ENCODE measurements at regions of chr17 and their contacts with region 1.

Region 1: DNA sequence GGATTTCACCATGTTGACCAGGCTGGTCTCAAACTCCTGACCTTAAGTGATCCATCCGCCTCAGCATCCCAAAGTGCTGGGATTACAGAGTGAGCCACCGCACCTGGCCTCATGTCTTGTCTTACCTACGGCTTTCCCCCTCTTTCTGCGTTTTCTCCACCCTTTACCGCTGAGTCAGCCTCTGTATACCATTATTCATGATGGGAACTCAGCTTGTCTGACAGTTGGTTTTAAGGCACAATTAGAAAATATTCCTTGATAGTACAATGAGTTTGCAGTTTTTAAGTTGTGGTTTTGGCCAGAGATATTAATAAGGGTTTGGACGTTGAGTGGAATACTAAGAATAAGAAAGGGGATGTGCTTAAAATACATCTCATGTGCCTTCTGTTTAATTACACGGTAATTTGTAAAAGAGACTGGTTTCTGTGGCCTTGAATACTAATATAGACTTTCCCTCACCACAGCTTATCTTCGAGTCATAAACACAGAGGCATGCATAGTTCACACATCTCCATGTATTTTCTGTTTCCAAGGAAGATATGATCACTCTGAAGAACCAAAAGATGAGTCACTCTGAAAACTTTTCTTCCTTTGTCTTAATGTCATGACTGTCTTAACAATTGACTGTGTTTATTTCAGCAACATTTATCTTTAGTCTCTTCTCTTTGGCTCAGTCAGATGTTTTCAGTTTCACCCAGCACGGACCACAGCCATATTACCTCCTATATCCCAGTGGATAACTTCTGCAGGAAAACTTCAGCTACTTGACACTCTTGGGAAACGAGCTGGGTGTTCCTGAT is 54.4 kb downstream of the PITPNC1 start:
- DNase-seq: peak; percentile 46
- H3K4me3 Mint-ChIP-seq: peak overlapping the region; percentile 25
- H3K27ac Mint-ChIP-seq: peak overlapping the region; percentile 95
- H3K4me1 Mint-ChIP-seq: peaks cover 76% of the 10 kb centered on the region
- H3K27me3 Mint-ChIP-seq: no peaks in the 10 kb centered on the region

Region 2: DNA sequence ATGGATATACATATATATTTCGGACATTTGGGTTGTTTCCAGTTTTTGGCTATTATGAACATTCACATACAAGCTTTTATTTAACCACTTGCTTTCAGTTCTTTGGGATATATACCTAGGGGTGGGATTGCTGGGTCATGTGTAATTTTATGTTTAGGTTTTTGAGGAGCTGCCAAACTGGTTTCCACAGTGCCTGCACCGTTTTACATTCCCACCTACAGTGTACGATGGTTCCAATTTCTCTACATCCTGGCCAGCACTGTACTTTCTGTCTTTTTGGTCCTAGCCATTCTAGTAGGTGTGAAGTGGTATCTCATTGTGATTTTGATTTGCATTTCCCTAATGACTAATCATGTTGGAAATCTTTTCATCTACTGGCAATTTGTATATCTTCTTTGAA is 24.5 kb before region 1 on chr17:
- CTCF ChIA-PET with region 1: interaction called, 3 read pairs
- intact Hi-C with region 1: loop called (anchors 1 kb)
- DNase-seq: no peak
- H3K4me3 Mint-ChIP-seq: no peak overlapping the region
- H3K27ac Mint-ChIP-seq: peak overlapping the region; percentile 72
- H3K4me1 Mint-ChIP-seq: peaks cover 66% of the 10 kb centered on the region
- H3K27me3 Mint-ChIP-seq: no peaks in the 10 kb centered on the region

Region 3: DNA sequence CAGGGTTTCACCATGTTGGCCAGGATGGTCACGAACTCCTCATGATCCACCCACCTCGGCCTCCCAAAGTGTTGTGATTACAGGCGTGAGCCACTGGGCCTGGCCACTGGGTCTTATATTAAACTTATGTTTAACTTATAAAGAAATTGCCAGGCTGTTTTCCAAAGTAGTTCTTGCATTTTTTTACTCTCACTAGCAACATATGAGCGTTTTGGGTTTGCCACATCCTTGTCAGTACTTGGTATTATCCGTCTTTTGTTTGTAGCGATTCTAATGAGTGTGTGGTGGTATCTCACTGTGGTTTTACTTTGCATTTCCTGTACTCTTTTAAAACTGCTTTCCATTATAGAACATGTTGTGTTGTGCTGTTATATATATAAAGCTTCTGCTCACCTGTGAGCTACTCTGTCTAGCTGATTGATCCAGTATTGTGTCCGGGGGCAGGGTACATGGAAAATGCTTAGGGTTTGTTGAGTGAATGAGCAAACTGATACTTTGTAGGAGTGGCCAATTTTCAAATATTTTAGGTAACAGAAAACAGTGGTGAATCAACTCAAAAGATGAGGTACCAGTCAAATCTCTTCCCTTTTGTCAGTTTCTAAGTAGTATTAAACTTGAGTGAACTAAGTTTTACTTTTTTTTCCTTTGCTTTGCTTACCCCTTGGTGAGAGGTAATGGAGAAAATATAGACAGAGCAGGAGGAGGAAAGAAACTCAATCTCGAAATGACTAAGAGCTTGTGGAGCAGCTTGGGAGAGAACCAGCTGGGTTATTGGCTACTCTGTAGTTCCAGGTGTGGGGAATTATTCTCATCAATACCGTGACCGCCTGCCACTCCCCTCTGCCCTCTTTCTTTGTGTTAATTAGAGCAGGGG is 21.5 kb after region 1 on chr17:
- CTCF ChIA-PET with region 1: interaction called, 9 read pairs
- intact Hi-C with region 1: loop called (anchors 1 kb)
- DNase-seq: peak; percentile 65
- H3K4me3 Mint-ChIP-seq: peak overlapping the region; percentile 53
- H3K27ac Mint-ChIP-seq: peak overlapping the region; percentile 91
- H3K4me1 Mint-ChIP-seq: peaks cover 91% of the 10 kb centered on the region
- H3K27me3 Mint-ChIP-seq: no peaks in the 10 kb centered on the region

Measured in activated naive CD4-positive, alpha-beta T cell treated with anti-CD3 and anti-CD28 coated beads for 36 hours (primary cell).